IMR-90 (cell line): ENCODE measurements at regions of chr6 and their contacts with region 1.

Region 1: DNA sequence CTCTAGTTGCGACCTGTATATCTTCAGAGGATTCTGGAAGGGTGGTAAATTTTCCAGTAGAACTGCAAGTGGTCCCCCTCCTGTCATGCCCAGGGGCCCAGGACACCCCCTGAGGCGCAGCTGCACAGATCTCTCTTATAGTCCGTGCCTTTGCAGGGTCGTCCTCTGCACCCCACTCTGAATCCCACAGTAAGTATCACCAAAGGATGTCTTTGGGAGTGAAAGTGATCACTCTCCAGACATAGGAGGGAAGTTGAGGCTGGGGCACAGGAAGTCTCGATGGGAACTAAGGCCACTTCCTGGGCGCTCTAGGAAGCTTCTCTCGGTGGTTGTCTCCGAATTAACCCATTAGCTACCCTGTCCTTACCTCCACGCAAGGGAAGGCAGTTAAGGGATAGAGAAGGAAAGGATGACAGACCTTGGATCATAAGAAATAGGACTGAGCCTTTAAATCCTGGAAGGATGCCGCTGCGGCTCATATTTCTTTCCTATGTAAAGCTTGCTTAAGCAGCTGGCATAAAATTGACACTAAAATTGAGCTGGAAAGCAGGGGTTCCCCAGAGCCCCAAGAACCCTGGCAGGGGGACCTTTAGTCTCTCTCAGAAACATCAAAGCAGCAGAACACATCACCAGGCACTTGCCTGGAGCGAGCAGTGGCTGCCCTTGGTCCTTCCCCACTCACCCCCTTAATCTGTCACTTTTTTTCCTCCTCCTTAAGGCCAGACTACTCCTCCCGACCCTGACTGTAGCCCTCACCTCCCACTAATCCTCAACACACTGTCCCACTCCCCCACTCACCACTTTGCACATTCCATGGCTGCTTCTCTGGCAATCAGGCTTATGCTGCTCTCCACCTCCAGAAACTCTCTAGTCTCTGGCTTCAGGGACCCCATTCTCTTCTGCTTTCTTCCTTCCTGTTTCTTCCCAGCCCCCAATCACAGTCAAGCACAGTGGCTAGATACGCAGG is at the start of gene ZKSCAN4:
- DNase-seq: peak; percentile 92
- ATAC-seq: peak; percentile 96
- H3K4me3 ChIP-seq: peak within 1 kb of the TSS; percentile 58
- H3K27ac ChIP-seq: peak within 1 kb of the TSS; percentile 59
- H3K4me1 ChIP-seq: peaks cover 7% of the 10 kb centered on the region
- H3K27me3 ChIP-seq: no peaks in the 10 kb centered on the region
- CTCF ChIP-seq: no peak
- POLR2A ChIP-seq: no peak
- RAD21 ChIP-seq: peak; percentile 27; the same call in 1 of the 2 replicates
- total RNA-seq, gene ZKSCAN4: 4.7 and 5.7 TPM in 2 replicates

Region 2: DNA sequence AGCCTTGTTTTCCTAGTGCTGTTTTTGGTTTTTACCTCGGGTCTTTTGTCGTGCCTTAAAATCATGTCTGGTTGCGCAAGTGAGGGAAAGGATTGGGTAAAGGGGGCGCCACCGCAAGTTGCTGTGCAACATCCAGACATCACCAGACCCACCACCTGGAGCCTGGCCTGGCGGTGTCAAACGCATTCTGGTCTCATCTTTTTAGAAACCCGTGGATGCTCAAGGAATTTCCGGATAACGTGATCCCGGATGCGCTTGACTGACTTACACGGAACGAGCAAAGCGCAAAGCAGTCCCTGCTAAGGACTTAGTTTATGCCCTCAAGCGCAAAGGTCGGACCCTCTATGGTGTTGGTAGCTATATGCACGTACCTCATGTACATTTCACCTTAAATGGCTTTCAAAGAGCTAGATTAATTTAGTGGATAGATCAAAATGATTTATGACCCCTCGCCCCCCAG is 445.3 kb before region 1 on chr6:
- CTCF ChIA-PET with region 1: no interaction called
- POLR2A ChIA-PET with region 1: no interaction called
- dilution Hi-C with region 1: no loop called
- in situ Hi-C with region 1: no loop called
- intact Hi-C with region 1: no loop called
- DNase-seq: peak; percentile 60
- ATAC-seq: no peak
- H3K4me3 ChIP-seq: peak overlapping the region; percentile 77
- H3K27ac ChIP-seq: peak overlapping the region; percentile 50
- H3K4me1 ChIP-seq: peaks cover 2% of the 10 kb centered on the region
- H3K27me3 ChIP-seq: no peaks in the 10 kb centered on the region
- CTCF ChIP-seq: no peak
- POLR2A ChIP-seq: no peak
- RAD21 ChIP-seq: no peak

Region 3: GRCh38 chr6:28266962-28267694 is 14.8 kb after region 1 on chr6 and contains the start of gene ZSCAN26:
- CTCF ChIA-PET with region 1: no interaction called
- POLR2A ChIA-PET with region 1: interaction called, 6 read pairs
- dilution Hi-C with region 1: no loop called
- in situ Hi-C with region 1: no loop called
- intact Hi-C with region 1: loop called (anchors 1 kb)
- DNase-seq: peak; percentile 89
- ATAC-seq: peak; percentile 92
- H3K4me3 ChIP-seq: peak within 1 kb of the TSS; percentile 72
- H3K27ac ChIP-seq: peak within 1 kb of the TSS; percentile 95
- H3K4me1 ChIP-seq: no peaks in the 10 kb centered on the region
- H3K27me3 ChIP-seq: no peaks in the 10 kb centered on the region
- CTCF ChIP-seq: no peak
- POLR2A ChIP-seq: peak; percentile 59; the same call in 1 of the 2 replicates
- RAD21 ChIP-seq: no peak
- total RNA-seq, gene ZSCAN26: 22.8 and 42.1 TPM in 2 replicates

Region 4: DNA sequence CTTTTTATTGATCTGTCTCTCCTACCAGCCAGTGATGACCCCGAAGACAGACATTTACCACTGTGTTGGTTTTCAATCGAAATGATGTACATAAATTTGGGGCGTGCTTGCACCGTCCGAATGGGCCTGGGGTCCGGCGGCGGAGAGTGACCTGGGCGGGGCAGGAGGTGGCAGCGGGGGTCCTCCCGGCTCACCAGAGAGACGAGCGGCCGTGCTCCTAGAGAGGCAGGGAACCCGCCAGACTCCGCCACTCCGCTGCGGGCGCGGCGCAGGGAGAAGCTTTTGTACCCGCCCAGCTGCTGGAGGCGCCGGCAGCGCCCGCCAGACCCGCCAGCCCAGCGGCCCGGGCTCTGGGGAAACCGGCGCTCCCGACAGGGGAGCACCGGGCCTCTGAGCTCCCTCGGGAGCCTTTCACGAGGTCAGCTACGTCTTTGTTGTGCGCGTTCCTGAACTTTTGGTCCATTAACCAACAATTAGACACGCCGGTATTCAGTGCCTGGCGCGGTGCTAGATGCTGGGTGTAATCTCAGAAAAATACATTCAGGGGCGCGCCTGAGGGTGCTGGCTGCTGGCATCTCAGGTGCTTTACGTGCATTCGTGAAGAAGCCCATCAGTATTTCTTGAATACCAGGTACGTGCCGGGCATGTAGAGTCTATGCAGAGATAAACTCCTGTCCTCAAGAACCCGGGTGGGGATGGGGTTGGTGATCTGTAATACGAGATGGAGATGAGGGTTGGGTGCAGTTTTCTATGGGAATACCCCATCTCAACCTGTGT is 29.2 kb after region 1 on chr6 and contains the start of gene PGBD1:
- CTCF ChIA-PET with region 1: no interaction called
- POLR2A ChIA-PET with region 1: no interaction called
- dilution Hi-C with region 1: no loop called
- in situ Hi-C with region 1: no loop called
- intact Hi-C with region 1: loop called (anchors 1 kb)
- DNase-seq: peak; percentile 77
- ATAC-seq: peak; percentile 97
- H3K4me3 ChIP-seq: peak within 1 kb of the TSS; percentile 95
- H3K27ac ChIP-seq: peak within 1 kb of the TSS; percentile 61
- H3K4me1 ChIP-seq: peaks cover 3% of the 10 kb centered on the region; the same call in 1 of the 2 replicates
- H3K27me3 ChIP-seq: no peaks in the 10 kb centered on the region
- CTCF ChIP-seq: no peak
- POLR2A ChIP-seq: peak; percentile 52
- RAD21 ChIP-seq: peak; percentile 21; the same call in 1 of the 2 replicates
- total RNA-seq, gene PGBD1: 6.3 and 6.9 TPM in 2 replicates

Region 5: DNA sequence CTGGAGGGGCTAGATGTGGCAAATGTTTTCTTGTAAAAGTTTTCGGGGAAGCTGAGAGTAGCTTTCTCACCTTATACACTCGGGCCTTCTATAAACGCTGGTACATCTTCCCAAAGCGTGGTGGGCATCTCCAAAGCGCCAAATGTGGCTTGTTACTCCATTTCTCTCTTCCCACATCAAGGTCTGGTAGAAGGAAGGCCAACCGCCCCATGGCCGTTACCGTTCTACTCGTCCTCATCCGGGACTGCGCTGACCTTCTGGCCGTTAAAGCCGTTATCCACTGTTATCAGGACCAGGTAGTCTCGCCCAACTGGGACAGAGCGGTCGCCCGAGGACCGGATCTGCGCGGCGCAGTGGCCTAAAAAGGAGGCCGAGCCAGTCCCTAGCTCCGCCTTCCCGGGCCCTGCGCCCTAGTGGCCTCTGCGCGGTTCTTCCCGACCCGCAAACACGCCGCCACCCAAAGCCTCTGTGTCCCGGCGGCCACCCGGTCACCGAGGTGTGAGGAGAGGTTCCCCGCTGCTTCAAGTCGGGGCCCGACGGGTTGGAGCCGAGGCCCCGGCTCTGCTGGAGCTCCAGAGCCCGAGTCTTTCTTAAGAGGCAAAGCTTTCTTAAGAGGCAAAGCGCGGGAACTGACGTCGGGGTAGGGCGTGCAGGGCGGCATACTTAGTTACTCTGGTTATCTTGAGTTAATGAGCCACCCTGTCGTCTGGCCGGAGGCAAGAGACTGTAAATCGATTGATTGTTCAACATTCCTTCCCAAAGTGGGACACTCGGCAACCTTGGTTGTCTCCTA is 363.9 kb after region 1 on chr6:
- CTCF ChIA-PET with region 1: no interaction called
- POLR2A ChIA-PET with region 1: no interaction called
- dilution Hi-C with region 1: no loop called
- in situ Hi-C with region 1: no loop called
- intact Hi-C with region 1: no loop called
- DNase-seq: no peak
- ATAC-seq: no peak
- H3K4me3 ChIP-seq: no peak overlapping the region
- H3K27ac ChIP-seq: no peak overlapping the region
- H3K4me1 ChIP-seq: no peaks in the 10 kb centered on the region
- H3K27me3 ChIP-seq: no peaks in the 10 kb centered on the region
- CTCF ChIP-seq: no peak
- POLR2A ChIP-seq: no peak
- RAD21 ChIP-seq: no peak